ENCODE measurements at regions of chr22 and their contacts with region 1.

Region 1: GRCh38 chr22:21712894-21713712 is 22.5 kb downstream of the YPEL1 start:
- DNase-seq: no peak
- H3K4me3 ChIP-seq: peak overlapping the region in 1 of 8 donors; percentile 21
- H3K27ac ChIP-seq: peak overlapping the region in 1 of 8 donors; percentile 37
- H3K4me1 ChIP-seq: peaks cover 6 to 13% (median 9%) of the 10 kb centered on the region in 6 donors
- H3K27me3 ChIP-seq: no peaks in the 10 kb centered on the region
- CTCF ChIP-seq: peak; percentile 71 to 87 (median 84)
- POLR2A ChIP-seq: no peak

Region 2: DNA sequence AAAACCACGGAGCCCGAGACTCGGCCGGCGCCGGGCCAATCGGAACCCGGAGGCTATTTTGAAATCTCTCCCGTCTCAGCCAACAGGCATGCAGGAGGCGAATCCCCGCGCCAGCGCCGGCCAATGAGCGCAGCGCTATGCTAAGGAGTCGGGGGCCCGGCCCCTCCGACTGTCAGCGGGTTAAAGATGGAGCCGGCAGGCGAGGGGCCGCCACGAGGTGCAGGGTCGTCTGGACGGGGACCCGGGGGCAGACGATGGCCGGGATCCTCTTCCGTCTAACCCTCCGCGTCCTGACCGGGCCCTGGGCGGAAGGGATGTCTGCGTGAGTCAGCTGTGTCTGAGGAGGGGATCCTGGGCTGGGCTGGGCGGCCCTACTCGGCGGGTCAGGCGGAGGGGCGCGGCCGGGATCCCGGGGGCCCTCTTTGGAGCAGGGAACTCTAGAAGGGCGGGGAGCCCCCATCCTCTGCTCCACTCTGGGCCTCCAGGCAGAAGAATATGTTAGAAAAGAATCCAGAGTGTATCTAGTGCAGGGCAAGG is 61.0 kb before region 1 on chr22:
- intact Hi-C with region 1: no loop called
- DNase-seq: peak; percentile 95
- H3K4me3 ChIP-seq: peak overlapping the region; percentile 45 to 86 (median 62)
- H3K27ac ChIP-seq: peak overlapping the region in 3 of 8 donors; percentile 20 to 56 (median 24)
- H3K4me1 ChIP-seq: peaks cover 4 to 38% (median 31%) of the 10 kb centered on the region in 6 donors
- H3K27me3 ChIP-seq: no peaks in the 10 kb centered on the region
- CTCF ChIP-seq: peak in 1 of 11 experiments; percentile 24
- POLR2A ChIP-seq: no peak

Region 3: GRCh38 chr22:21778705-21779363 is 65.7 kb after region 1 on chr22:
- intact Hi-C with region 1: no loop called
- DNase-seq: no peak
- H3K4me3 ChIP-seq: no peak overlapping the region
- H3K27ac ChIP-seq: no peak overlapping the region
- H3K4me1 ChIP-seq: peaks cover 0 to 50% (median 5%) of the 10 kb centered on the region in 6 donors
- H3K27me3 ChIP-seq: no peaks in the 10 kb centered on the region
- CTCF ChIP-seq: no peak
- POLR2A ChIP-seq: no peak

Region 4: GRCh38 chr22:21881841-21882753 is 169.0 kb after region 1 on chr22:
- intact Hi-C with region 1: no loop called
- DNase-seq: no peak
- H3K4me3 ChIP-seq: no peak overlapping the region
- H3K27ac ChIP-seq: no peak overlapping the region
- H3K4me1 ChIP-seq: peaks cover 0 to 2% (median under 1%) of the 10 kb centered on the region in 6 donors
- H3K27me3 ChIP-seq: no peaks in the 10 kb centered on the region
- CTCF ChIP-seq: no peak
- POLR2A ChIP-seq: no peak

Region 5: DNA sequence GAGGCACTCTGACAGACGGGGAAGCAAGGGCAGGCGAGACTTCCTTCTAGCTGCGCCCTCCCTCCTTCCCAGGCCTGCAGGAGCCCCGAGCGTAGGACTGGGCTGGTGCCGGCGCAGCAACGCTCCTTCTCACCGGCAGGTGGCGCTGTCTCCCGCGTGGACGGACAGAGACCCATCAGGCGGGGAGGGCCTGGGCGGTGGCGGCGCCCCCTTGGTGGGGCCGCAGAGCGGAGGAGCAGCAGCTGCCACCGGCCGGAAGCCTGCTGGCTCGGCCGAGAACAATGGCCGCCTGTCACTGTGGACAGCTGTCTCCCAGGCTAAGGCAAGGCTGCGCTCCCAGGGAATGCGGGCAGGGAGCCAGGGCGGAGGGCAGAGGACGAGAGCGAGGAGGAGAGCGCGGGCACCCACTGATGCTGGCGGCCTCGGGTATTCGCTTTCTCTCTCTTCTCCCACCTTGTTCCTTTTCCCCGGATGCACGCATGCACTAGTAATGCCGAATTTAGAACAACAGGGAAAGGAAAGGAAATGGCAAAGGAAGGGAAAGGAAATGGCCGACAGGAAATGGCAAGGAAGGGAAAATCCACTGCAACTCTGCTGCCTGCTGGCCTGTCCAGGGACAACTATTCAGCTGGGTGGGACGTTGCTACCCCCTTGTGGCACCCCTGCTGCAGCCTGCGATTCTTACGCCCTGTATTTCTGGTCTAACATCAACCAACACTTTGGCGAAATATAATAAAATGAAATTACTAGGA is 225.1 kb after region 1 on chr22:
- intact Hi-C with region 1: loop called (anchors 5 kb)
- DNase-seq: peak; percentile 99
- H3K4me3 ChIP-seq: peak overlapping the region; percentile 27 to 72 (median 44)
- H3K27ac ChIP-seq: peak overlapping the region; percentile 80 to 95 (median 90)
- H3K4me1 ChIP-seq: peaks cover 52 to 98% (median 83%) of the 10 kb centered on the region in 6 donors
- H3K27me3 ChIP-seq: no peaks in the 10 kb centered on the region
- CTCF ChIP-seq: peak; percentile 99 to 100 (median 100)
- POLR2A ChIP-seq: no peak

Region 6: GRCh38 chr22:21952586-21953571 is 239.8 kb after region 1 on chr22 and contains the start of gene PPM1F:
- intact Hi-C with region 1: loop called (anchors 5 kb)
- DNase-seq: peak; percentile 98
- H3K4me3 ChIP-seq: peak within 1 kb of the TSS; percentile 40 to 84 (median 68)
- H3K27ac ChIP-seq: peak within 1 kb of the TSS; percentile 42 to 95 (median 88)
- H3K4me1 ChIP-seq: peaks cover 19 to 52% (median 45%) of the 10 kb centered on the region in 6 donors
- H3K27me3 ChIP-seq: no peaks in the 10 kb centered on the region
- CTCF ChIP-seq: peak; percentile 52 to 96 (median 93)
- POLR2A ChIP-seq: no peak
- total RNA-seq, gene PPM1F: 63.4 to 103 (median 87.8) TPM